Cardiac septum (tissue), 1 donor: ENCODE measurements at regions of chr17 and their contacts with region 1.

Region 1: GRCh38 chr17:32486111-32486700 is 587 bp upstream of the CDK5R1 start:
- DNase-seq: peak; percentile 86

Region 2: GRCh38 chr17:32444308-32445073 is 41.7 kb before region 1 on chr17 and contains the start of gene PSMD11:
- intact Hi-C with region 1: no loop called
- DNase-seq: peak; percentile 98
- total RNA-seq, gene PSMD11: 81.7 TPM

Region 3: DNA sequence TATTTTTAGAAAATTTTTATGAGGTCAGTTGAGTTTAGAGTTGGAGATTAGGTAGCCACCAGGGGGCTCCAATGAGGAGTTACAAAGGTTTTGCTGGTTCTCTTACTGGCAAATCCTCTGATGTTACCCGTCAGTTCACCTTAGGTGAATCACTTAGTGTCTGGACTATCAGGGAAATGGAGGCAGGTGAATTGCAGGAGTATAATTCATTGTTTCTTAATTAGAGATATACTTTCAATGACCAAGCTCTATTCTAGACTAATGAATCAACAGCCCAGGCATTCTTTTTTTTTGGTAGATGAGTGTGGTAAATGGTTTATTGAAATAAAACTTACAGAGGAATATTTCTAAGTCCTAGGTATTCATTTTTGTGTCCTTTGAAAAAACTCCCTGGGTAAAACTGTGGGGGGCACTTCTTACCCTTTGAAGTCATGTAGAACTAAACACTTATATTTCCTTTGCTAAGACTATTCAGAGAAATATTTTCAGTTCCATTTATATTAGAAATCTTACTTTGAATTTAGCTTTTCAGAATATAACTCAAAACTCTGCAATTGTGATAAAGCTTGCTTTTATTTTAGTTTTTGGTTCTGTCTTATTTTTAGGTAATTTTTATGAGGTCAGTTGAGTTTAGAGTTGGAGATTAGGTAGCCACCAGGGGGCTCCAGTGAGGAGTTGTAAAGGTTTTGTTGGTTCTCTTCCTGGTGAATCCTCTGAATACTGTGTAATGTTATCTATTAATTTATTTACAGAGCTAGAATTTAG is 24.2 kb before region 1 on chr17:
- intact Hi-C with region 1: no loop called
- DNase-seq: no peak

Region 4: GRCh38 chr17:32519228-32520103 is 33.3 kb after region 1 on chr17:
- intact Hi-C with region 1: loop called (anchors 5 kb)
- DNase-seq: peak; percentile 77

Region 5: DNA sequence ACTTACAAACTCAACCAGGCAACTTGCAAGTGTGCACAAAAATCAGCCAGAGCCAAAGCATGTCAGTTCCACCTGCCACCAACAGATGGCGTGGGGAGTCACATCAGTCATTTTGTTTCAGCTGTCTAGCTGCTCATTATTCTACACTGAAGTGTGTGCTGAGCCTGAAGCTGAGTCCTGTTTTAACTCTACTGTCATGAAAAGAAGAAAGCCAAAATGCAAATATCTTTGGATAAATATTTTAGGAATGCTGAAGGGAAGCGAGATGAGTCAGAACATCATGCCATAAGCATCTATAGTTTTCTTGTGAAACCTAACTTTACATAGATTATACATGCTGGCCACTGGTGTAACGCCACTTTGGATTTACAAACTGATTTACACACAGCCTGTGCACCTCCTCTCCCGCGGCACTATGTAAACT is 173.2 kb after region 1 on chr17:
- intact Hi-C with region 1: loop called (anchors 10 kb)
- DNase-seq: peak; percentile 80

Region 6: GRCh38 chr17:32755045-32755805 is 269.0 kb after region 1 on chr17:
- intact Hi-C with region 1: loop called (anchors 5 kb)
- DNase-seq: no peak